ENCODE measurements at regions of chr3 and their contacts with region 1.

Region 1: DNA sequence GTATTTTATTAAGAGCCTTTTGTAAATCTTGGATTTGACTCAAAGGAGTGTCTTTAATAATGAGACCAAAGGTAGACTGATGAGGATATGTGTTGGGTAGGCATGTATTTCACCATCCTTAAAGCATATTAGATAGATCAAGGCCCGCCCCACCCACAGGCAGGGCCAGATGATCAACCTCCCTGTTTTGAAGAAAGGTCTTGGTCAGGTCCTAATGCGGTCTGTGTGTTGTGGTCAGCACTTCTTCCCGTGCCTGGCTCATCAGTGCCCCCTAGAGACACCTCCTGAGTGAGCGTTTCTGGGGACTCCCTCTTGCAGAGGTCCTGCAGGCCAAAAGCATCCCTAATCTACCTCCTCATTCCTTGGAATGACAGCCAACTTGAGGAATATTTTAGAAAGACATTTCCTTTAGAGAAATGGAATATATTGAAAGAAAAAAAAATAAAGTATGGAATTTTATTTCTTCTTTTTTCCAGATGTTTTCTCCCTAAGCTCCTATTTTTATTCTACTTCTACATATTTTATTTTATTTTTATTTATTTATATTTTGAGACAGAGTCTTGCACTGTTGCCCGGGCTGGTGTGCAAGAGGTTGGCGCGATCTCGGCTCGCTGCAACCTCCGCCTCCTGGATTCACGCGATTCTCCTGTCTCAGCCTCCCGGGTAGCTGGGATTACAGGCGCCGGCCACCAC is 6.0 kb downstream of the TM4SF4 start:
- DNase-seq: peak; percentile 90

Region 2: DNA sequence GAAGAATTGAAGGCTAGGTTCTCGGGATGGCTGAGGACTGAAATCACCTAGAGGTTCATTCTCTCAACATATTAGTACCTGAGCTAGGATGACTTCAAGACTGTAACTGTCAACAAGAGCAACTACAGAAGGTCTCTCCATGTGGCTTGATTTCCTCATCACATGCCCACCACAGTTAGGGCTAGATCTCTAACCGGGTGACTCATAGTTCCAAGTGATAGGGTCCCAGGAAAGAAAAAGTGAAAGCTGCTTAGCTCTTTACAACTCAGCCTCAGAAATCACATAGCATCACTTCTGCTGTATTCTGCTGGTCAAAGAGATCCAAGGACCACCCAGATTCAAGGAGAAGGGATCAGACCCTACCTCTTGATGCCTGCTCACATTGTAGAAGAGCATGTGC is 948.1 kb before region 1 on chr3:
- intact Hi-C with region 1: no loop called
- DNase-seq: no peak

Region 3: GRCh38 chr3:149273096-149273751 is 207.2 kb before region 1 on chr3:
- intact Hi-C with region 1: loop called (anchors 10 kb)
- DNase-seq: no peak

Region 4: GRCh38 chr3:149352556-149352955 is 127.9 kb before region 1 on chr3:
- intact Hi-C with region 1: loop called (anchors 1 kb)
- DNase-seq: no peak

Region 5: GRCh38 chr3:149393345-149394160 is 86.9 kb before region 1 on chr3:
- intact Hi-C with region 1: loop called (anchors 1 kb)
- DNase-seq: peak; percentile 86